T-cell (primary cell): ENCODE measurements at regions of chr9 and their contacts with region 1.

Region 1: GRCh38 chr9:88287972-88288371 is 100.3 kb upstream of the SPIN1 start:
- DNase-seq: no peak
- ATAC-seq: no peak
- H3K4me3 ChIP-seq: no peak overlapping the region
- H3K4me3 Mint-ChIP-seq: no peak overlapping the region
- H3K27ac ChIP-seq: no peak overlapping the region
- H3K27ac Mint-ChIP-seq: no peak overlapping the region
- H3K4me1 ChIP-seq: no peaks in the 10 kb centered on the region
- H3K4me1 Mint-ChIP-seq: no peaks in the 10 kb centered on the region
- H3K27me3 ChIP-seq: no peaks in the 10 kb centered on the region
- H3K27me3 Mint-ChIP-seq: no peaks in the 10 kb centered on the region

Region 2: DNA sequence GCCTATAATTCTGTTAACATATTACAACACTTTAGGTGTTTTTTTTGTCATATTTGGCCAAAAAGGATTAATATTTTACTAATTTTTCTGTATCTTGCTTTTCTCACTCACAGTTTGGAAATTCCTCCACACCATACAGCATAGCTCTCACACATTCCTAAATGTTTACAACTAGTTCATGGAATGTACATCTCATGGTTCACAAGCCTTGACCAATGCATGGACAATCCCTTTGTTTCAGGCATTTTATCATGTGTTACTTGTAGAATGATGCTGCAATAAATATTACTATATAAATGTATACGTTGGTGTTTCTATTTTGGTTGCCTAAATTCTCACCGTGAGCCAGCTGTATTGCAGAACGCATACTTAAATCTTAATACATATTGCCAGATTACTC is 69.2 kb before region 1 on chr9:
- CTCF ChIA-PET with region 1: no interaction called
- POLR2A ChIA-PET with region 1: interaction called in 1 of 2 experiments, 15 read pairs
- DNase-seq: no peak
- ATAC-seq: no peak
- H3K4me3 ChIP-seq: no peak overlapping the region
- H3K4me3 Mint-ChIP-seq: no peak overlapping the region
- H3K27ac ChIP-seq: no peak overlapping the region
- H3K27ac Mint-ChIP-seq: no peak overlapping the region
- H3K4me1 ChIP-seq: no peaks in the 10 kb centered on the region
- H3K4me1 Mint-ChIP-seq: no peaks in the 10 kb centered on the region
- H3K27me3 ChIP-seq: peaks cover 0 to 16% of the 10 kb centered on the region in 2 experiments
- H3K27me3 Mint-ChIP-seq: peaks cover 18 to 31% of the 10 kb centered on the region in 2 donors